ENCODE measurements at regions of chr1 and their contacts with region 1.

Region 1: GRCh38 chr1:74485622-74486021 is 26.8 kb downstream of the LRRC53 start:
- DNase-seq: no peak
- ATAC-seq: no peak
- H3K4me3 Mint-ChIP-seq: no peak overlapping the region
- H3K27ac Mint-ChIP-seq: no peak overlapping the region
- H3K4me1 Mint-ChIP-seq: peaks cover 34% of the 10 kb centered on the region
- H3K27me3 Mint-ChIP-seq: peaks cover under 1% of the 10 kb centered on the region; the same call in 1 of the 2 replicates
- CTCF ChIP-seq: no peak

Region 2: DNA sequence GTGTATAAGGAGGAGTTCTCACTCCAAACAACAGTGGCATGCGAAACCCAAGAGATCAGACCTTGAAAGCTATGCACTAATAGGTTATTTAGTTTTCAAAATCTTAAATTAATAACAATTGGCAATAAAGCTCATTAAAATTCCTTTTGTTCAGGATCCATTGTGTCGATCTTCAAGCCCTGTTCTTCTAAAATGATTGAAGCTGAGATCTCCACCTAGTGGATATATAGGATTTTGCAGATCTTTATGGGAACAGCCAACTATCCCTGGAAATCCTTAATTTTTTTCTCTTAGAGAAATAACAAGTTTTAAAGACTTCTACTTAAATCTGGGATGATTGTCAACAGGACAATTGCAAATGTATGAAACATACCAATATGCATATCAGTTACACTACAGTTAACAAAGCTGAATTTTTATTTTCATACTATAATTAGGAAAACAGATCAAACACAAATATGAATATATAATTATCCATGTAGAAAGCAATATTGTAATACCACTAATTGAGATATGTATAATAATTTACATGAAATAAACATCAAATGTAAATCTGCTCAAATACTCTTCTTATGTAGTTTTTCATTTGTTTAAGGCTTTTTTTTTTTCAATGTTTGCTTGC is 16.5 kb before region 1 on chr1:
- CTCF ChIA-PET with region 1: interaction called, 10 read pairs
- POLR2A ChIA-PET with region 1: no interaction called
- DNase-seq: no peak
- ATAC-seq: peak; percentile 49; the same call in 1 of the 2 replicates
- H3K4me3 Mint-ChIP-seq: no peak overlapping the region
- H3K27ac Mint-ChIP-seq: no peak overlapping the region
- H3K4me1 Mint-ChIP-seq: peaks cover 34% of the 10 kb centered on the region
- H3K27me3 Mint-ChIP-seq: no peaks in the 10 kb centered on the region
- CTCF ChIP-seq: peak; percentile 34

Region 3: GRCh38 chr1:74496669-74497068 is 11.0 kb after region 1 on chr1:
- CTCF ChIA-PET with region 1: no interaction called
- POLR2A ChIA-PET with region 1: no interaction called
- DNase-seq: no peak
- ATAC-seq: no peak
- H3K4me3 Mint-ChIP-seq: no peak overlapping the region
- H3K27ac Mint-ChIP-seq: no peak overlapping the region
- H3K4me1 Mint-ChIP-seq: peaks cover 14% of the 10 kb centered on the region
- H3K27me3 Mint-ChIP-seq: no peaks in the 10 kb centered on the region
- CTCF ChIP-seq: no peak

Region 4: DNA sequence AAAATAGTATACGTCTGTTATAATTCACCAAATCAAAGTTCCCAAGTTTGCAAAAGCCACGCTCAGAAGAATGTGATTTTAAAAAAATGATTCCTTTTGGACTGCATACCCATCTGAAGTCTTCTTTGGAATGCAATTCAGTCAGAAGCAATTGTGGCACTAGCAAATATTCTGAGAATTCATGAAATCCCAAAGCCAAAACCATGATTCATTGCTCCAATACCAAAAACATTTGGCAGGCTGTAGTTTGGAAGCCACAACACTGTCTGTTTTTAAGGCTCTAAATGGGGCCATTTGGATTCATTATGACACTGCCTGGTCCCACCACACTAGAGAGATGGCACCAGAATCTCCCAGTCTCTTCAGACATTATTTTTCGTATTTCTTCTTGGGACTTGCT is 48.6 kb after region 1 on chr1:
- CTCF ChIA-PET with region 1: no interaction called
- POLR2A ChIA-PET with region 1: no interaction called
- DNase-seq: no peak
- ATAC-seq: no peak
- H3K4me3 Mint-ChIP-seq: no peak overlapping the region
- H3K27ac Mint-ChIP-seq: no peak overlapping the region
- H3K4me1 Mint-ChIP-seq: no peaks in the 10 kb centered on the region
- H3K27me3 Mint-ChIP-seq: no peaks in the 10 kb centered on the region
- CTCF ChIP-seq: no peak